HEK293 (cell line): ENCODE measurements at regions of chr2 and their contacts with region 1.

Region 1: GRCh38 chr2:88059979-88060906 is 4.7 kb upstream of the KRCC1 start:
- H3K4me3 ChIP-seq: no peak overlapping the region
- H3K27ac ChIP-seq: no peak overlapping the region
- H3K4me1 ChIP-seq: no peaks in the 10 kb centered on the region; the same call in 1 of the 2 replicates
- CTCF ChIP-seq: 0 out of 2 replicates have a peak, but pooled peaks have one; percentile 34

Region 2: DNA sequence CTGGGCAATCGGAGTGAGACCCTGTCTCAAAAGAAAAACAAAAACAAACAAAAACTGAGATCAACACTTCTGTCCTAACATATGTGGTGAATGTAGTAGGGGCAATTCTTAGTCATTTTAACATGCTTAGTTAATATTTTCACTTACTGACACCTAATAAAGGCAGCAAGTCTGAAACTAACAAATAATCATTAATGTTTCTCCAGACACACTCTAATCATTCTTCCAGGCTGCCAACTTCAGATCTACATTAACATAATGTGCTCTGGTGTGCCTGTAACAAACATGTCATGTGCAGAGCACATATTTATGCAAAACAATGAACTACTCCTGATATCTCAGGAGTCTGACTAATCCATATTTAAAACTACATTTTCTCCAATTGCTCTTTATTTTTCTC is 10.6 kb before region 1 on chr2:
- CTCF ChIA-PET with region 1: interaction called, 17 read pairs
- POLR2A ChIA-PET with region 1: no interaction called
- H3K4me3 ChIP-seq: no peak overlapping the region
- H3K27ac ChIP-seq: no peak overlapping the region
- H3K4me1 ChIP-seq: 0 out of 2 replicates have a peak, but pooled peaks cover 5% of the 10 kb centered on the region
- CTCF ChIP-seq: no peak

Region 3: GRCh38 chr2:88090446-88091283 is 30.4 kb after region 1 on chr2:
- CTCF ChIA-PET with region 1: interaction called, 17 read pairs
- POLR2A ChIA-PET with region 1: no interaction called
- H3K4me3 ChIP-seq: no peak overlapping the region
- H3K27ac ChIP-seq: no peak overlapping the region
- H3K4me1 ChIP-seq: no peaks in the 10 kb centered on the region
- CTCF ChIP-seq: no peak

Region 4: GRCh38 chr2:88131201-88131998 is 71.2 kb after region 1 on chr2:
- CTCF ChIA-PET with region 1: interaction called, 13 read pairs
- POLR2A ChIA-PET with region 1: no interaction called
- H3K4me3 ChIP-seq: no peak overlapping the region
- H3K27ac ChIP-seq: no peak overlapping the region
- H3K4me1 ChIP-seq: peaks cover 2% of the 10 kb centered on the region; the same call in 1 of the 2 replicates
- CTCF ChIP-seq: no peak

Region 5: DNA sequence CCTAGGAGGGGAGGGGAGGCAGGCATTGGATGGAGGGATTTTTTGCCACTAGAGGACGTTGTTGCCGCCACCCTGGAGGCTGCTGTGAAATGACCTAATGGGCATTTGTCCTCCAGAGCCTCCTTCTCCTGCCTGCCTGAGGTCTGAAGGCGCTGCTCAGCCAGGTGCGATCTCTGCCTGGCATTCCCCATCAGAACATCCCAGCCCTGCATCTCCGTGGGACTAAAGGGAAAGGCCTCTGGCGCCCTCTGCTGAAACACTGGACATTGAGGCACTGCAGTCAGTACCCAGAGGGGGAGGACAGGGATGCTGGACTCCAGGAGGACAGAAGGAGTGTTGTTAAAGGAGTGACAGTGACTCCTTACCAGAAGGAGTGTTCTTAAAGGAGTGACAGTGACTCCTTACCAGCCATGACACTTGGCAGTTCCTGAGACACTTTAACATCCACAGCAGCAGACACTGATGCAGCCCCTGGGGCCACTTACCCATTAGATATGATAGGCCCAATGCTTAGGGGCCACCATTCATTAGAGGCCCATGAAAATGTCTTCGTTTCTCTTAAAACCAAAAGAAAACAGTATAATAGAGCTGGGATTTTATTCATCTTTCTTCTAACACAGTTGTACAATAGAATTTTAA is 126.9 kb after region 1 on chr2:
- CTCF ChIA-PET with region 1: interaction called, 20 read pairs
- POLR2A ChIA-PET with region 1: no interaction called
- H3K4me3 ChIP-seq: no peak overlapping the region
- H3K27ac ChIP-seq: no peak overlapping the region
- H3K4me1 ChIP-seq: no peaks in the 10 kb centered on the region
- CTCF ChIP-seq: peak; percentile 68